ENCODE measurements at regions of chr19 and their contacts with region 1.

Region 1: DNA sequence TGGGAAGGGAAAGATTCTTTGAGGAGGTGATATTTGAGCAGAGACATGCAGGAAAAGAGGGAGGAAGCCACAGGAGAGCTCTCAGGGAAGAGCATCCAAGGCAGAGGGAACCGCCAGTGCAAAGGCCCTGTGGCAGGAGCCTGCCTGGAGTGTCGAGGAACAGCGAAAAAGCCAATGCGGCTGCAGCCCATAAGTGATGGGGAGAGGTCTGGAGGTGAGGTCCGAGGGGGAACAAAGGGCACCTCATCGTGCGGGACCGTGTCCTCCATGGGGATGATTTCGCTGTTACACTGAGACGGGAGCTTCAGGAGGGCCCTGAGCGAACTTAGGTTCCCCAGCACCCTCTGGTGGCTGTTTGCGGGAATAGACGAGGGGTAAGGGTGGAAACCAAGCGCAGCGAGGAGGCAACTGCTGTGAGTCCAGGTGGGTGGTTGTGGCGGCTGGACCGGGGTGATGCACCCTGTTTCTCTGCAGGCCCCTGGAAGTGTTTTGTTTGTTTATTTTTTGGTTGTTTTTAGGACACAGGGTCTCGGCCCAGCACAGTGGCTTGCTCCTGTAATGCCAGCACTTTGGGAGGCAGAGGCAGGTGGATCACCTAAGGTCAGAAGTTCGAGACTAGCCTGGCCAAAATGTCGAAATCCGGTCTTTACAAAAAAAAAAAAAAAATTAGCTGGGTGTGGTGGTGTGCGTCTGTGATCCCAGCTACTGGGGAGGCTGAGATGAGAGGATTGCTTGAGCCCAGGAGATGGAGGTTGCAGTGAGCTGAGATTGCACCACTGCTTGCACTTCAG is 5.9 kb upstream of the EHD2 start:
- DNase-seq: peak; percentile 82
- H3K4me3 Mint-ChIP-seq: no peak overlapping the region
- H3K27ac Mint-ChIP-seq: no peak overlapping the region
- H3K4me1 Mint-ChIP-seq: peaks cover 6% of the 10 kb centered on the region
- H3K27me3 Mint-ChIP-seq: peaks cover 8% of the 10 kb centered on the region

Region 2: DNA sequence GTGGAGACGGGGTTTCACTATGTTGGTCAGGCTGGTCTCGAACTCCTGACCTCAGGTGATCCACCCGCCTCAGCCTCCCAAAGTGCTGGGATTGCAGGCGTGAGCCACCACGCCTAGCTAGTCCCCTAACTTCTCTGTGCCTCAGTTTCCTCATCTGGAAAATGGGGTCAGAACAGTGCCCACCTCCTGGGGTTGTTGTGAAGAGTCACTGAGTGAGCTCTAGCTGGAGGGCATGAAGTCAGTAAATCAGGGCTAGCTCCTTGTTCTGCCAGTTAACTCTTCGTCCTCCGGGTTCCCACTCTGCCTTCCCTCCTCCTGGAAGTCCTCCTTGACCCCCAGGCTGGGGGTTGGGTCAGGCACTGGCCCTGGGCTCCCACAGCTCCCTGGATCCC is 15.4 kb after region 1 on chr19:
- CTCF ChIA-PET with region 1: interaction called, 12 read pairs
- POLR2A ChIA-PET with region 1: no interaction called
- DNase-seq: no peak
- H3K4me3 Mint-ChIP-seq: no peak overlapping the region
- H3K27ac Mint-ChIP-seq: no peak overlapping the region
- H3K4me1 Mint-ChIP-seq: no peaks in the 10 kb centered on the region
- H3K27me3 Mint-ChIP-seq: peaks cover 7% of the 10 kb centered on the region